Mammary epithelial cell (primary cell): ENCODE measurements at regions of chr20 and their contacts with region 1.

Region 1: GRCh38 chr20:39359981-39360620 is 398.0 kb downstream of the DHX35 start:
- DNase-seq: no peak
- H3K4me3 ChIP-seq: no peak overlapping the region
- H3K27ac ChIP-seq: no peak overlapping the region
- H3K4me1 ChIP-seq: no peaks in the 10 kb centered on the region
- H3K27me3 ChIP-seq: no peaks in the 10 kb centered on the region
- CTCF ChIP-seq: no peak

Region 2: GRCh38 chr20:39302312-39302711 is 57.8 kb before region 1 on chr20:
- CTCF ChIA-PET with region 1: no interaction called
- dilution Hi-C with region 1: no loop called
- in situ Hi-C with region 1: no loop called
- intact Hi-C with region 1: no loop called
- DNase-seq: no peak
- H3K4me3 ChIP-seq: no peak overlapping the region
- H3K27ac ChIP-seq: no peak overlapping the region
- H3K4me1 ChIP-seq: no peaks in the 10 kb centered on the region
- H3K27me3 ChIP-seq: no peaks in the 10 kb centered on the region
- CTCF ChIP-seq: no peak

Region 3: DNA sequence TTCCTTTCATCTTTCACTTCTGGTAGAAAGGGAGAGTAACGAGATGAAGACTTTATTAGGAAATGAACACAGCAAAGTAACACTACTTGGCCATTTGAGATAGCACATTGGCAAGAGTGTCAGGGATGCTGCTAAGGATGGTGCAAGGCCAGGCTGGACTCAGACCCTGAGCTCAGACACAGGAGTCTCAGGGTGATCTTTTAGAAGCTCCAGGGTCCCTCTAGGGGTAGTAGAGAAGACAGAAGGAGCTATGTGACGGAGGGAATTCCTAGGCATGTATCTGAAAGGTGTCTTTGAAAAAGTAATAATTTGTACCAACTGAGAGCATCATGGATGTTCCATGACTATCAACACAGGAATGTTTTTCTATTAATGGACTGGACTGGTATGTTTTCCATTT is 38.6 kb after region 1 on chr20:
- CTCF ChIA-PET with region 1: no interaction called
- dilution Hi-C with region 1: loop called (anchors 5 kb)
- in situ Hi-C with region 1: no loop called
- intact Hi-C with region 1: no loop called
- DNase-seq: no peak
- H3K4me3 ChIP-seq: no peak overlapping the region
- H3K27ac ChIP-seq: no peak overlapping the region
- H3K4me1 ChIP-seq: no peaks in the 10 kb centered on the region
- H3K27me3 ChIP-seq: no peaks in the 10 kb centered on the region
- CTCF ChIP-seq: no peak

Region 4: DNA sequence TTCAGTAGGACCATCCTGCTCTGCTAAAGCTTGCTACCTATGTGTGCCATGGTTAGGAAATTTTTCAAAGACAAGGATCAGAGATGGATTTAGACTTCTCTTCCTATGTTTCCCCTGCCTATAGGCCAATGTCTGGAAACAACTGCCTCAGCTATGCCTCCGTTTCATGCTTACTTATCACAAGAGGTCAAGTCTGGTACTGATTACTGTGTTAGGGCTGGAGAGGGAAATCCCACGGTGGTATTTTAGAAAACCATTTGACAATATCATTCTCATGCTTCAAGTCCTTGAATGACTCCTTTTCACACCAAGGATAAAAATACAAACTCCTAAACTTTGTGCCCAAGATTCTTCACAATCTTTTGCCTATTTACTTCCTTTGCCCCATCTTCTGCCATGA is 86.3 kb after region 1 on chr20:
- CTCF ChIA-PET with region 1: no interaction called
- dilution Hi-C with region 1: loop called (anchors 5 kb)
- in situ Hi-C with region 1: no loop called
- intact Hi-C with region 1: no loop called
- DNase-seq: no peak
- H3K4me3 ChIP-seq: no peak overlapping the region
- H3K27ac ChIP-seq: no peak overlapping the region
- H3K4me1 ChIP-seq: no peaks in the 10 kb centered on the region
- H3K27me3 ChIP-seq: no peaks in the 10 kb centered on the region
- CTCF ChIP-seq: no peak